ENCODE measurements at regions of chr4 and their contacts with region 1.

Region 1: DNA sequence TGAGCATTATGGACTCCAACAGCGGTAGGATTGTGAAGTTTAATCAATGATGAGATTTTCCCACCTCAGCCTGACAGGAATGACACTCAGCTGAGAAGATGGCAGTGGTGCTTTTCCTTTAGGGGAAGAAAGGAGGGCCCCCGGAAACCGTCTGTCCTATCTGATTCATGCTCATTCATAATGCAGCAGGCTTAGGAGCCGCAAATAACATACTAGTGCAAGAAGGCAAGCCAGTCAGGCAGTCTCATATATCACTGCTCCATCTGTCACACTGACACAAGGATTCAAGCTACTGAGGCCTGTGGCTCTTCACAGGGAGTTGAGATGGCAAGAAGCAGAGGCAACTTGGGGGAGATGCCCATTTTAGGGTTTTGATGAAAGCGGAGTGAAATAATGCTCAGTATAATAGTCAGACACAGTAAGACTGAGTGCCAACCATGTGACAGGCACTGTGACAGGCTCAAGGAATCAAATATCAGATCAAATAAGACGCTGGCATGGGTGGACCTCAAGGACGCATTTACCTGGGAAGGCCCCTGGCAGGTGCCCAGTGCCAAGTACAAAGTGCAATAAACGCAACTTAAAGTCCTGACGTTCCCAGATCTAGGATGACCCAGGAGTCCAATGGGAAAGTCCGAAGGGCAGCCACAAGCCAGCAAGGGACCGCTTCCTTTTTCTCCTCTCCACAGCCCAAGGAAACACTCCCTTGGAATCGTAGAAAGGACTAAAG is 63.4 kb downstream of the FHDC1 start:
- DNase-seq: no peak
- ATAC-seq: no peak
- H3K4me3 ChIP-seq: no peak overlapping the region
- H3K27ac ChIP-seq: no peak overlapping the region
- H3K4me1 ChIP-seq: no peaks in the 10 kb centered on the region
- H3K27me3 ChIP-seq: peaks cover 33 to 76% of the 10 kb centered on the region in 2 experiments
- CTCF ChIP-seq: no peak
- EP300 ChIP-seq: no peak
- POLR2A ChIP-seq: no peak
- RAD21 ChIP-seq: no peak

Region 2: GRCh38 chr4:153058671-153059060 is 59.2 kb after region 1 on chr4:
- CTCF ChIA-PET with region 1: no interaction called
- POLR2A ChIA-PET with region 1: no interaction called
- in situ Hi-C with region 1: no loop called
- intact Hi-C with region 1: loop called (anchors 5 kb)
- DNase-seq: no peak
- ATAC-seq: no peak
- H3K4me3 ChIP-seq: no peak overlapping the region
- H3K27ac ChIP-seq: no peak overlapping the region
- H3K4me1 ChIP-seq: no peaks in the 10 kb centered on the region
- H3K27me3 ChIP-seq: peaks cover 0 to 6% of the 10 kb centered on the region in 2 experiments; a peak in 1 of 5 replicates
- CTCF ChIP-seq: no peak
- EP300 ChIP-seq: no peak
- POLR2A ChIP-seq: no peak
- RAD21 ChIP-seq: no peak